Activated CD4-positive, alpha-beta T cell treated with anti-CD3 and anti-CD28 coated beads, Interleukin-2, amount 10 ng/mL, durations not matched to agents 7 days and 5 days (primary cell): ENCODE measurements at regions of chr17 and their contacts with region 1.

Region 1: DNA sequence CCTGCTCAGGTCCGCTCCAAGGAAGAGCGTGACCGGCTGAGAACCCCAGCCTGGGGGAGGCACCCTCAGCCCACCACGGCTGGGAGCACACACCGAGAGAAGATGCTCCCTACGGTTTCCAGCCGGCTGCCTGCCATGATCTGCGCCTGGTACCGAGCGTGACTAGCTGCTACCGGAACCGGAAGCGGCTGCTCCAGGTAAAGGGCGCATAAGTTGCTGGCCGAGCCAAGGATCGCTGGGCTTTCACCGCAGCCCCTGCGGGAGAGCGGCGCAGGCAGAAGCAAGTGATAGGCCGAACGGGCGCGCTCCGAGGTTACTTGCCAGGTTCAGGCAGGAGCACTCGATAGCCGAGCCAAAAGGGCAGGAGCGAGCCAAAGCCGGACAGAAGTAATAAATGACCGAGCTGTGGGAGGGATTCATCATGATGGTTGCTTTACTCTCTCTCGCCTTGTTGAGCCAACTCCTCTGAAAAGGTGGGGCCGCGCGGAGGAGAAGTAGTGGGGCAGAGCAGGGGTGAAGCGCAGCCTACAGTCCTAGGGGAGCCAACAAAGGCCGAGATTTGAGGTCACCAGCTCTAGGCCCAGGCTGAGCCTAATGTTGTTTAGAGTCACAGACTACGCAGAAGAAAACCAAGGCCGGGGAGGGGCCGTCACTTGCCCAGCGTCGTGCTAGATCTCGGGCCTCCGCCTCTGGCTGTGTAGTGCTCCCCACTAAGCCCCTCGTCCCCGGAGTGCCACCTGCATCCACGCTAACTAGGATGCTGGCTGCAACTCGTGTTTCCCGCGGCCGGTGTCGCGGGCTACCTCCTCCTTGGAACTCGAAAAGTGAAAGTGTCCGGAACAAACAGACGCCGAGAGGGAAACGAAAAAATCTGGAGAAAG is at the start of gene MRPS23:
- DNase-seq: peak; percentile 98
- H3K4me3 Mint-ChIP-seq: peak within 1 kb of the TSS; percentile 88
- H3K27ac Mint-ChIP-seq: peak within 1 kb of the TSS; percentile 97
- H3K4me1 Mint-ChIP-seq: peaks cover 41% of the 10 kb centered on the region
- H3K27me3 Mint-ChIP-seq: no peaks in the 10 kb centered on the region
- total RNA-seq, gene MRPS23: 27.1 to 38.4 TPM

Region 2: GRCh38 chr17:57833179-57833939 is 16.8 kb before region 1 on chr17:
- CTCF ChIA-PET with region 1: interaction called, 15 read pairs
- POLR2A ChIA-PET with region 1: no interaction called
- DNase-seq: peak; percentile 83
- H3K4me3 Mint-ChIP-seq: no peak overlapping the region
- H3K27ac Mint-ChIP-seq: no peak overlapping the region
- H3K4me1 Mint-ChIP-seq: peaks cover 6% of the 10 kb centered on the region
- H3K27me3 Mint-ChIP-seq: no peaks in the 10 kb centered on the region

Region 3: DNA sequence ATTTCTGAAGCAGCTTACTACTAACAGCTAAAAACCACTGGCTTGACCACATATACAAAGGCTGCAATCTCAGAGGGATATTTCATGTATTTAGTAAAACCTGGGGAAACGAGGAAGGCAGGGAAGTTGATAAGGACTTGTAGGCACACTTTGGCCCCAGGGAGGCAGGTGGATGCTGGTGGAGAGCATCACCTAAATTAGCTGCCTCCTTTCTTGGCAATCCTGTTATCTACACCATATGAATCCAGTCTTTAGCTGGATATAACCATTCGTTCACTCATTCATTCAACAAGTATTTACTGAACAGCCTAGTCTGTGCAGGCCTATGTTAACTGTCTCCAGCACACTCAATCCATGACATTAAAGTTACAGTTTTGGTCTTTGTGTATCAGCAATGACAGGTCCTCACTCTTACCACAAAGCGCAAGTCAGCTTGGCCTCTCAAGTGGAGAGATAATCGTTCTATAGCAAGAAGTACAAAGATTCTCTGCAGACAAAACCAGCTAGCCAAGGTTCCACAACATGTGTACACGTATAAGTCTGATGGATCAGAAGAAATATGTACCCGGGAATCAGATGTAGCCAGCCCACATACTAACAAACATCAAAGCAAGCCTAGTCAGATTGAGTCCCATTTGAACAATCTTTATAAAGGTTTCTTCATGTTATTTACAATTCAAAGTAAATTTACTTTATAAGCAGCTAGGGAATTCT is 11.1 kb before region 1 on chr17:
- CTCF ChIA-PET with region 1: interaction called, 15 read pairs
- POLR2A ChIA-PET with region 1: no interaction called
- DNase-seq: no peak
- H3K4me3 Mint-ChIP-seq: no peak overlapping the region
- H3K27ac Mint-ChIP-seq: no peak overlapping the region
- H3K4me1 Mint-ChIP-seq: peaks cover 6% of the 10 kb centered on the region
- H3K27me3 Mint-ChIP-seq: no peaks in the 10 kb centered on the region

Region 4: DNA sequence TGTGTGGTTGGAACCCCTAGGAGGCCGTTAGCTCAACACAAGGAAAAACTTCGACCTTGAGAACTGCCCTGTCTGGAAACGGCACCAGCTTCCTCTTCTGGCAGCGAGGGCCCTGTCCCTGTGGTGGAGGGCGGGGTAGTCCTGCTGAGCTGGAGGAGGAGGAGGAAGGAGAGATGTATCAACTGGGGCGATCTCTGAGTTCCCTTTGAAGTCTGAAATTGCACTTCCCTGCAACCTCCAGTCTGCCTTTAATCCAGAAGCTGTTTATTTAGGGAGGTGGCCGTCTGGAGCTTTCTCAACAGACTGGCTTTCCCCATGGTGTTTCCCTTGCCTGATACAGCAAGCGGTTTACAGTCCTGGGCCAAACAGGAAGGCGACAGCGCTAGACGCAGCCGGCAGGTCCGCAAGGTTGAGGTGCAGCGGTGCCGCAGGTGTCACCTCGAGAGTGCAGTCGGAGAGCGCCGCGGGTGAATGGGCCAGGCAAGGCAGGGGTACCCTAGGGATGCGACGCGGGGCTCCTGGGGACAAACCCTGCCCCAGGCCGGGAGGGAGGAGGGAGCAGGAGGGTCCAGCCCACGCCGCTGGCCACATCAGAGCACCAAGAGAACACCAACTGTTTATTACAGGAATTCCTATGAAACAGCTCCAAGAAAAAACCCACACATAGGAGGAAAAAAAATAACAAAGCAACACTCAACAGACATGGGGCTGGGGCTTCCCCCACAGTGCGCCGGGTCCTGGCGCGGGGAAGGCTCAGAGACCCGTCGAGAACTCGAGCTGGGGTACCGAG is 11.1 kb after region 1 on chr17:
- CTCF ChIA-PET with region 1: interaction called, 15 read pairs
- POLR2A ChIA-PET with region 1: no interaction called
- DNase-seq: peak; percentile 45
- H3K4me3 Mint-ChIP-seq: peak overlapping the region; percentile 66
- H3K27ac Mint-ChIP-seq: peak overlapping the region; percentile 55
- H3K4me1 Mint-ChIP-seq: peaks cover 14% of the 10 kb centered on the region
- H3K27me3 Mint-ChIP-seq: peaks cover 40% of the 10 kb centered on the region